Calu3 (cell line): ENCODE measurements at regions of chr1 and their contacts with region 1.

Region 1: DNA sequence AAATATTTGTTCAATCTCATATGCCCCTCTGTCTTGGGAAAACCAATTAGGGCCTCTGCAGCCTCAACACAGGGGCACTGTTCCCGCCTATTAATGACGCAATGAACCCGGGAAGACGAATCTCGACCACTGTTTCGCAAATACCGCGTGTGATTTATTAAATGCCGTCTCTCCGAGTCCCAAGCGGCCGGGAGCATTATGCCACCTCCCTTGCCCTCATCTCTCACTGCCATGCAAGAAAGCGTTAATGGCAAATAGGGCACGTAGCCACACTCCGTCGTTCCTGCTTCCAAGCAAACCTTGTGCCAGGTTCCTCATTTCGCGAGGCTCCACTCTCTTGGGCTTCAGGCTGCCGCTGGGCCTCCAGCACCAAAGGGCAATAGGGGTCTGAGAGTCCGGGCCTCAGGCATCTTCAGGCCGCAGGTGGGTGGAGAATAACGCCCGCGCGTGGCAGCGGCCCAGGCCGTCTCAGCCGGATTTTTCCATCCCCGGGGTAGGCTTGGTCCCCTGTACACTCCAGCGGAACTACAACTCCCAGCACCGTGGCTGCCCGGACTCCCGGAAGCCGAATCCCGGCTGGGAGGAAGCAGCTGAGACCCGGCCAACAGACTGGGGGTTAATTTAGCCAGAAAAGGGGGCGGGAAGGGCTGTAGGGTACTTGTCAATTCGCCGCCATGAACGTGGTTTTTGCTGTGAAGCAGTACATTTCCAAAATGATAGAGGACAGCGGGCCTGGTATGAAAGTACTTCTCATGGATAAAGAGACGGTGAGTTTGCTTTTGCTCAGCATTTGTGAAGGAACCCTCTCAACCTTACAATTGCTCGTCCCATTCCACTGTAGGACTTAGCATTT is at the start of gene VPS45:
- DNase-seq: peak; percentile 93
- H3K4me3 Mint-ChIP-seq: peak within 1 kb of the TSS; percentile 86
- H3K27ac Mint-ChIP-seq: peak within 1 kb of the TSS; percentile 69
- H3K4me1 Mint-ChIP-seq: peaks cover 27% of the 10 kb centered on the region
- H3K27me3 Mint-ChIP-seq: no peaks in the 10 kb centered on the region
- CTCF ChIP-seq: no peak
- total RNA-seq, gene VPS45: 35.0 and 37.9 TPM in 2 replicates

Region 2: GRCh38 chr1:149886396-149887195 is 180.8 kb before region 1 on chr1:
- CTCF ChIA-PET with region 1: no interaction called
- intact Hi-C with region 1: no loop called
- DNase-seq: peak; percentile 89
- H3K4me3 Mint-ChIP-seq: no peak overlapping the region
- H3K27ac Mint-ChIP-seq: no peak overlapping the region
- H3K4me1 Mint-ChIP-seq: no peaks in the 10 kb centered on the region
- H3K27me3 Mint-ChIP-seq: no peaks in the 10 kb centered on the region
- CTCF ChIP-seq: no peak

Region 3: DNA sequence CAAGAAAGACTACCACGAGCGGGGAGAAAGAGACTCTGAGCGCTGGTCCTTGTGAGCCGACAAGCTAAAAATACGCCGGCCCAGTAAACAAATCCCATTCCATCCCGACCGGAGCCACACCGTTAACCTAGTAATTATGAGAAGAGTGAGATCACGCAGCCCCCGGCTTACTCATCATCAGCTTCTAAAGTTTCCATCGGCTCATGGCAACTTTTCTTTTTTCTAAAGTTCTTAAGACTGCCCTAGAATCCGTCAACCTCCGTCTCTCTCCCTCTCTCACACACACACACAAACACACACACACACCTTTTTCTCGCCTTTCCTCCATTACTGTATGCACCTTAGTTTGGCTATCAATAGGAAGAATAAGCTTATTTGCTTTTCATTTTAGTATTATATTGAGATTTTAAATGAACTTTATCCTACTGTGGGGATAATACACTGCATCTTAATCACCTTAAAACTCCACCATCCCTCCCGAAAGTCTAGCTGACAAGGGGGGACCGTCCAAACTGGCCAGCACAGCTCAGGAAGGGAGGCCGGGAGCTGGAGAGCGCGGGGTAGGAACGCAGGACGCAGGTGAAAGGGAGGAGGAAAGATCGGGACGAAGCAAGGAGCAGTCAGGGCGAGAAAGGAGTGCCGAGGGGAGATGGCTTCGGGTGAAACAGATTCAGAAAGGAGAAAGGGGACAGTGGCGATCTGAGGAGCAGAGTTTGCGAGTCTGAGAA is 57.6 kb before region 1 on chr1:
- CTCF ChIA-PET with region 1: interaction called, 3 read pairs
- intact Hi-C with region 1: loop called (anchors 5 kb)
- DNase-seq: no peak
- H3K4me3 Mint-ChIP-seq: peak overlapping the region; percentile 88
- H3K27ac Mint-ChIP-seq: peak overlapping the region; percentile 89
- H3K4me1 Mint-ChIP-seq: peaks cover 27% of the 10 kb centered on the region
- H3K27me3 Mint-ChIP-seq: no peaks in the 10 kb centered on the region
- CTCF ChIP-seq: no peak